Activated naive CD4-positive, alpha-beta T cell treated with anti-CD3 and anti-CD28 coated beads for 36 hours (primary cell): ENCODE measurements at regions of chr15 and their contacts with region 1.

Region 1: GRCh38 chr15:81265944-81266775 is 57.8 kb downstream of the STARD5 start:
- DNase-seq: peak; percentile 93
- H3K4me3 Mint-ChIP-seq: peak overlapping the region; percentile 65
- H3K27ac Mint-ChIP-seq: no peak overlapping the region
- H3K4me1 Mint-ChIP-seq: peaks cover 29% of the 10 kb centered on the region
- H3K27me3 Mint-ChIP-seq: no peaks in the 10 kb centered on the region

Region 2: GRCh38 chr15:80970018-80970658 is 296.0 kb before region 1 on chr15:
- CTCF ChIA-PET with region 1: interaction called, 12 read pairs
- intact Hi-C with region 1: no loop called
- DNase-seq: peak; percentile 76
- H3K4me3 Mint-ChIP-seq: no peak overlapping the region
- H3K27ac Mint-ChIP-seq: no peak overlapping the region
- H3K4me1 Mint-ChIP-seq: peaks cover 8% of the 10 kb centered on the region
- H3K27me3 Mint-ChIP-seq: no peaks in the 10 kb centered on the region

Region 3: GRCh38 chr15:81117136-81117535 is 149.0 kb before region 1 on chr15:
- CTCF ChIA-PET with region 1: interaction called, 254 read pairs
- intact Hi-C with region 1: no loop called
- DNase-seq: no peak
- H3K4me3 Mint-ChIP-seq: no peak overlapping the region
- H3K27ac Mint-ChIP-seq: no peak overlapping the region
- H3K4me1 Mint-ChIP-seq: no peaks in the 10 kb centered on the region
- H3K27me3 Mint-ChIP-seq: peaks cover 23% of the 10 kb centered on the region

Region 4: DNA sequence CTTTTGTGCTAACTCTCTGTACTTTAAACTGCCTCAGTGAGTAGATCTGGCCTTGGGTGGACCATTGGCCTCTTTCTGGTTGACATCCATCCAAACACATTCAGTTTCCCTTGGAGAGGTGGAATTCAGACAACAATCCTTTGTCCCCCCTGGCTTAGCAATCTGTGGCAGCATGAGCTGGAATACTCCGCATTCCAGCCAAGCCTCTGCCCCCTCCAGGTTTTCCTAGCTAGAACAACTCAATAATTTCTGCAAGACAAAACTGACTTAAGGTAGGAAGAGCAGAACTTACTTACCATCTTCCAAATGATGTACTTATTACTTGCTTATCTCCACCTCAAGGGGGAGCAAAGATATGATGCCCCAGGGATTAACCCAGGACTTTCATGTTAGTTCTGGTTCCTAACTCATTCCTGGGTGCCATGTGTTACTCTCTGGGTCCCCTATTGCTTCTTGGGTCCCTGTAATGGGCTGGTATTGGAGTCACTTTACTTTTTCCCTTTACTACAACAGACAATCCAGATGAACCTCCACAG is 91.3 kb before region 1 on chr15:
- CTCF ChIA-PET with region 1: interaction called, 16 read pairs
- intact Hi-C with region 1: no loop called
- DNase-seq: no peak
- H3K4me3 Mint-ChIP-seq: no peak overlapping the region
- H3K27ac Mint-ChIP-seq: no peak overlapping the region
- H3K4me1 Mint-ChIP-seq: no peaks in the 10 kb centered on the region
- H3K27me3 Mint-ChIP-seq: peaks cover 3% of the 10 kb centered on the region

Region 5: DNA sequence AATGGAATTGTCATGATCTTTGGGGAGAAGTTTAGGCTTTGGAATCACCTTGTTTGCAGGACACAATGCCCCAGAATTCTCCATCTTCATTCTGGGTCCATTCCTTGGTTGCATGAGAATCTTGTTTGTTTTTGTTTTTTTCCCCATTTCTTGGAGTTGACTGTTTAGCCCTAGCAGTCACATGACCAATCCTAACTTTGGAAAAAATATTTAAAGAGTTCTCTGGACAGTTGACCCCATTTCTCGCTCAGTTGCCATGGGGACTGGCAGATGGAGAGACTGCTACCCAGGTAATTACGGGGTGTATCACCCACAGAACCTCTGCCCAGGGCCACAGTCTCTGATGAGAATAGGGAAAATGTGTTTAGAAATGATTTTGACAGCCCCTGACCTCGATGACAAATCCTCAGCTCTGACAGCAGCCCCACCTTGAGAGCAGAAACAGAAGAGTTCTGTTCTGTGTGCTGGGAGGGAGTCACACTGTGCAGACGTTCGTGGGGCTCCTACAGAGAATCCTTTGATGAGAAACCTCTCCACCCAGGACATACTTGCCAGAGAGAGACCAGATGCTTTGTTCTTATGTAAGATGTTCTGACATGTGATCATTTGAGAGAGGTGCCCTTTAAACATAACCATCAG is 11.8 kb before region 1 on chr15:
- CTCF ChIA-PET with region 1: interaction called, 25 read pairs
- intact Hi-C with region 1: no loop called
- DNase-seq: no peak
- H3K4me3 Mint-ChIP-seq: no peak overlapping the region
- H3K27ac Mint-ChIP-seq: no peak overlapping the region
- H3K4me1 Mint-ChIP-seq: no peaks in the 10 kb centered on the region
- H3K27me3 Mint-ChIP-seq: peaks cover 6% of the 10 kb centered on the region

Region 6: DNA sequence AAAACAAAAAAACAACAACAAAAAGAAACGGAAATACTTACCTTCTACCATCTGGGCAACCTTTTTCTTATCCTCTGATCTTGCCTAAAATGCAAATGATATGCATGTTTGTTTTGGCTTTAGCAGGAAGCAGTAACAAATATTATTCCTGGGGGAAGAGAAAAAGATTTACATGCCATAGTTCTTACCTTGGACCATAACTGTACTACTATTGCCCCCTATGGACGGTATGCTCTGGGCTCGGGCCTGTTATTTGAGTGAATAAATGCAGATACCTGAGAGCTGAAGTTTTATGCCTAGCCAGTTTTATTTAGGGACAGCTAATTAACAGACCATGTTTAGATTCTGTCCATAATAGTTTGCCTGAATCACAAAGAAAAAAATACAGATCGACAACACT is 70.4 kb after region 1 on chr15:
- CTCF ChIA-PET with region 1: interaction called, 32 read pairs
- intact Hi-C with region 1: no loop called
- DNase-seq: peak; percentile 69
- H3K4me3 Mint-ChIP-seq: no peak overlapping the region
- H3K27ac Mint-ChIP-seq: no peak overlapping the region
- H3K4me1 Mint-ChIP-seq: peaks cover 15% of the 10 kb centered on the region
- H3K27me3 Mint-ChIP-seq: no peaks in the 10 kb centered on the region